B cell (primary cell): ENCODE measurements at regions of chr13 and their contacts with region 1.

Region 1: DNA sequence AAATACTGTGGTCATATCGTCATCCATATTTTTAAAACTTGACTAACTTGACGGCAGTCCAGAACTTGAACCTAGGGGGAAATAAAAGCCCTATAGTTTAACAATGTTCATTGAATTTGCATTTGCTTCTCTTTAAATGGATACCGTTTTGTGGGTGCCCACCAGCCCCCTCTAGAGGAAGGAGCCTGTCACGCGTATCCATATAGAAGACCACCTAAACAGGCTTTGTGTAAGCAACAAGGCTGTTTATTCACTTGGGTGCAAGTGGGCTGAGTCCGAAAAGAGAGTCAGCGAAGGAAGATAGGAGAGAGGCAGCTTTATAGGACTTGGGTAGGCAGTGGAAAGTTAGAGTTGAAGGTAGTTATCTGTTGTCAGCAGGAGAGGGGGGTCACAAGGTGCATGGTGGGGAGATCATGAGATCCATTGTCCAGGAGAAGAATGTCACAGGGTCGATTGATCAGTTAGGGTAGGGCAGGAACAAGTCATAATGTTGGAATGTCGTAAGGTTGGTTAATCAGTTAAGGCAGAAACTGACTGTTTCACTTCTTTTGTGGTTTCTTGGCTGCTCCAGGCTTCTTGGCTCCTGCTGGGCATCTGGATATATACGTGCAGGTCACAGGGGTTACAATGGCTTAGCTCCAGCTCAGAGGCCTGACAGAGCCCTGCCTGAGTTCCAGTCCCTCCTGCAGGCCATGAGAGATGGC is 42.5 kb upstream of the ANKRD10 start:
- DNase-seq: no peak
- ATAC-seq: no peak
- H3K4me3 ChIP-seq: no peak overlapping the region
- H3K4me3 Mint-ChIP-seq: no peak overlapping the region
- H3K27ac ChIP-seq: no peak overlapping the region
- H3K27ac Mint-ChIP-seq: no peak overlapping the region
- H3K4me1 ChIP-seq: no peaks in the 10 kb centered on the region
- H3K4me1 Mint-ChIP-seq: no peaks in the 10 kb centered on the region
- H3K27me3 ChIP-seq: no peaks in the 10 kb centered on the region
- H3K27me3 Mint-ChIP-seq: peaks cover 7% of the 10 kb centered on the region
- CTCF ChIP-seq: no peak

Region 2: DNA sequence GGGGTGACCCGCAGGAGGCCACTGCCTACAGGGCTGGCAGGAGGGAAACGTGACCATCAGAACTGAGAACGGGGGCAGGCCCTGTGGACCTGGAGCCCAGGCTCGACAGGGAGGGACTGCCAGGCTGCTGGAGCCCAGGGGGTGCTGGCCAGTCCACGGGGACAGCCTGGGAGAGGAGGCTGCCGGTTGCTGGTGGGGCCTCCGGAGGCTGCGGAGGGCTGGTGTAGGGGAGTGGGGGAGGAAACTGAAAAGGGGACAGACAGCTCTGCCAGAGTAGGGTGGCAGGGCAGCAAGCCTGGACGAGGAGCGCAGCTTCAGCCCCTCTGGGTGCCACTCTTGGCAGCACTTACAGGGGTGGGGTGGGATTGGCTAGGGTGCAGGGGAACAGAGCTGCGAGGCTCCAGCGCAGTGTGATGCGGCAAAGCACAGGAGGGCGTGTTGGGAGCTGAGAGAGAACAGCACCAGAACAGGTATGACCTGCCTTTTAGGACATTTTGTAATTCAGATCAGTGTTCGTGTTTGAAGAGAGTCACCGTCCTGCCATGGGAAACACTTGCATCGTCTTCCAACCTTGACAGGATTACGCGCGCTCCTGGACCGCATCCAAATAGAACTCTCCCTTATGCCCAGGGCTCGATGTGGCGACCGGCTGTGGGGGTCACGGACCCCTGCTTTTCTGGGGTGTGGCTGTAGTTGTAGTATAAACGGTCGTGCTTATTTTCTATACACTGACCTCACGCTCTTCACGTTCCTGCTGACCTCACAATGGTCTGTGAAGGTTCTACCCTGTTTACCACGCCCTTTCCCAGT is 137.9 kb after region 1 on chr13:
- CTCF ChIA-PET with region 1: no interaction called
- POLR2A ChIA-PET with region 1: no interaction called
- intact Hi-C with region 1: no loop called
- DNase-seq: no peak
- ATAC-seq: no peak
- H3K4me3 ChIP-seq: no peak overlapping the region
- H3K4me3 Mint-ChIP-seq: no peak overlapping the region
- H3K27ac ChIP-seq: no peak overlapping the region
- H3K27ac Mint-ChIP-seq: no peak overlapping the region
- H3K4me1 ChIP-seq: no peaks in the 10 kb centered on the region
- H3K4me1 Mint-ChIP-seq: no peaks in the 10 kb centered on the region
- H3K27me3 ChIP-seq: peaks cover 0 to 28% (median 10%) of the 10 kb centered on the region in 4 experiments
- H3K27me3 Mint-ChIP-seq: peaks cover 54% of the 10 kb centered on the region
- CTCF ChIP-seq: no peak

Region 3: DNA sequence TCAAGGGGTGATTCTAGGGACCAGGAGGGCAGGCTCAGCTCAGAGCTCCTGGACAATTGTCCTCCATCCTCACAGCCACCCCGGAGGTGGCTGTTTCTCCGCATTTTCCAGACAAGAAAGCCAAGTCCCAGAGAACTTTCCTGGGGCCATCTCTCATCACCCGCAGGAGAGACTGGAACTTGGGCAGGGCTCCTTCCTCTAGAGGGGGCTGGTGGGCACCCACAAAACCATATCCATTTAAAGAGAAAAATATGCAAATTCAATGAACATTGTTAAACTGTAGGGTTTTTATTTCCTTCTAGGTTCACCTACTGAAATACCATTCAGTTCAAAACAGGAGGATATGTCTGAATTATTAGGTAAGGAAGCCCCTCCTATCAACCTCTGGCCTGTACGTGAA is 1435.4 kb after region 1 on chr13:
- CTCF ChIA-PET with region 1: no interaction called
- POLR2A ChIA-PET with region 1: no interaction called
- intact Hi-C with region 1: loop called (anchors 10 kb)
- DNase-seq: no peak
- ATAC-seq: no peak
- H3K4me3 ChIP-seq: no peak overlapping the region
- H3K4me3 Mint-ChIP-seq: no peak overlapping the region
- H3K27ac ChIP-seq: no peak overlapping the region
- H3K27ac Mint-ChIP-seq: no peak overlapping the region
- H3K4me1 ChIP-seq: no peaks in the 10 kb centered on the region
- H3K4me1 Mint-ChIP-seq: no peaks in the 10 kb centered on the region
- H3K27me3 ChIP-seq: no peaks in the 10 kb centered on the region
- H3K27me3 Mint-ChIP-seq: peaks cover 3% of the 10 kb centered on the region
- CTCF ChIP-seq: no peak